Activated CD4-positive, alpha-beta T cell treated with anti-CD3 and anti-CD28 coated beads for 36 hours (primary cell): ENCODE measurements at regions of chr10 and their contacts with region 1.

Region 1: GRCh38 chr10:16843252-16843870 is 26.1 kb upstream of the RSU1 start:
- DNase-seq: no peak
- ATAC-seq: peak; percentile 78
- H3K4me3 Mint-ChIP-seq: no peak overlapping the region
- H3K27ac Mint-ChIP-seq: no peak overlapping the region
- H3K4me1 Mint-ChIP-seq: peaks cover 6% of the 10 kb centered on the region
- H3K27me3 Mint-ChIP-seq: no peaks in the 10 kb centered on the region

Region 2: DNA sequence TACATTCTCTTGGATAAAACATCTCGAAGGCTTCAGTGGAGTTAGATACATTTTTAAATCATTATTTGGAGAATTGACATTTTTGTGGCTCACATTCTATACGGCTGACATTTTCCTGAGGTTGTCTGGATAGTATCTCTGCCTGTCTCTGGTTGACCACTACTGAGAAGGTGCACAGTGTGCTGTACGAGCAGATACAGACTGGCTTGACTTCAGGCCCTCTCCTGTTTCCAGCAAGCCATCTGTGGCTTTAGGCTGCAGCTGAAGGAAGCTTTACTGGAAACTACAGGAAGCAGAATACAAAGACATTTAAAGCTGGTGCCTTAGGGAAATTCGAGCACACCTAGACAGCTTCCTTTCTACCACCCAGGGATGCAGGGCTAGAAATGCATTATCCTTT is 13.2 kb after region 1 on chr10:
- CTCF ChIA-PET with region 1: interaction called, 10 read pairs
- POLR2A ChIA-PET with region 1: no interaction called
- intact Hi-C with region 1: no loop called
- DNase-seq: no peak
- ATAC-seq: no peak
- H3K4me3 Mint-ChIP-seq: no peak overlapping the region
- H3K27ac Mint-ChIP-seq: no peak overlapping the region
- H3K4me1 Mint-ChIP-seq: no peaks in the 10 kb centered on the region
- H3K27me3 Mint-ChIP-seq: no peaks in the 10 kb centered on the region

Region 3: GRCh38 chr10:17029581-17030271 is 186.4 kb after region 1 on chr10:
- CTCF ChIA-PET with region 1: no interaction called
- POLR2A ChIA-PET with region 1: no interaction called
- intact Hi-C with region 1: loop called (anchors 5 kb)
- DNase-seq: peak; percentile 93
- ATAC-seq: peak; percentile 27
- H3K4me3 Mint-ChIP-seq: peak overlapping the region; percentile 61
- H3K27ac Mint-ChIP-seq: peak overlapping the region; percentile 90
- H3K4me1 Mint-ChIP-seq: peaks cover 76% of the 10 kb centered on the region
- H3K27me3 Mint-ChIP-seq: no peaks in the 10 kb centered on the region

Region 4: GRCh38 chr10:17249820-17250219 is 406.5 kb after region 1 on chr10:
- CTCF ChIA-PET with region 1: interaction called, 4 read pairs
- POLR2A ChIA-PET with region 1: no interaction called
- intact Hi-C with region 1: loop called in 1 of 2 experiments (anchors 2 kb)
- DNase-seq: no peak
- ATAC-seq: peak; percentile 77
- H3K4me3 Mint-ChIP-seq: no peak overlapping the region
- H3K27ac Mint-ChIP-seq: no peak overlapping the region
- H3K4me1 Mint-ChIP-seq: no peaks in the 10 kb centered on the region
- H3K27me3 Mint-ChIP-seq: no peaks in the 10 kb centered on the region

Region 5: GRCh38 chr10:17430647-17431355 is 587.4 kb after region 1 on chr10:
- CTCF ChIA-PET with region 1: no interaction called
- POLR2A ChIA-PET with region 1: no interaction called
- intact Hi-C with region 1: loop called (anchors 1 to 5 kb)
- DNase-seq: peak; percentile 77
- ATAC-seq: no peak
- H3K4me3 Mint-ChIP-seq: no peak overlapping the region
- H3K27ac Mint-ChIP-seq: no peak overlapping the region
- H3K4me1 Mint-ChIP-seq: peaks cover 55% of the 10 kb centered on the region
- H3K27me3 Mint-ChIP-seq: peaks cover 1% of the 10 kb centered on the region